Natural killer cell (primary cell): ENCODE measurements at regions of chr6 and their contacts with region 1.

Region 1: DNA sequence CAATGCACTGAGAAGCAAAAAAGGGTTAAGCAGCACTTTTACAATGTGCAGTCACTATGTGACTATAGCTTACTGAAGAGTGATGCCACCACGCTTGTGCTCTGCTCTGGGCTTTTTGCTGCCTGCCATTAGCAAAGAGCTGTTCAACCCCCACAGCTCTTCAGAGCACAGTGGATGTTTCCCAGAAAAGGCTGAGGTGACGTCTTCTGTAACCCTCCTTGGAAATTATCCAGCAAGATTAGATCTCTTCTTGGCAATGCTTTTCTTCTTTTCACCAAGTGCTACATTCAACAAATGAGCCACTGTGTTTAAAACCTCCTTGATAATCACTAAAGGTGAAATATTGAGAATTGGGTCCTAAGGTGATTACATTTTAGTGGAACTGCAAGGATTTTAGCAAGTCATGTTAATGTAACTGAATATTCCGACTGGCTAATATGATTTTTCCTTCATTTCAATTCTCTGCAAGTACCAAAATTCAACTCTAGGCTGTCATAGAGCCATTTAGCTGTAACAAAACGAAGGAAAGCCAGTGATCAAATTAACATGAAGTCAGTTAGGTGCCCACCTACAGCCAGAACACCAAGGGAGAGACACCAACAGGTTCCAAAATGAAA is 34.9 kb downstream of the ELOVL5 start:
- DNase-seq: no peak
- ATAC-seq: no peak
- H3K4me3 ChIP-seq: no peak overlapping the region
- H3K4me3 Mint-ChIP-seq: peak overlapping the region; percentile 4
- H3K27ac ChIP-seq: no peak overlapping the region
- H3K27ac Mint-ChIP-seq: peak overlapping the region; percentile 60
- H3K4me1 ChIP-seq: peaks cover 40% of the 10 kb centered on the region
- H3K4me1 Mint-ChIP-seq: peaks cover 80 to 90% of the 10 kb centered on the region in 2 donors
- H3K27me3 ChIP-seq: no peaks in the 10 kb centered on the region
- H3K27me3 Mint-ChIP-seq: no peaks in the 10 kb centered on the region
- CTCF ChIP-seq: no peak

Region 2: DNA sequence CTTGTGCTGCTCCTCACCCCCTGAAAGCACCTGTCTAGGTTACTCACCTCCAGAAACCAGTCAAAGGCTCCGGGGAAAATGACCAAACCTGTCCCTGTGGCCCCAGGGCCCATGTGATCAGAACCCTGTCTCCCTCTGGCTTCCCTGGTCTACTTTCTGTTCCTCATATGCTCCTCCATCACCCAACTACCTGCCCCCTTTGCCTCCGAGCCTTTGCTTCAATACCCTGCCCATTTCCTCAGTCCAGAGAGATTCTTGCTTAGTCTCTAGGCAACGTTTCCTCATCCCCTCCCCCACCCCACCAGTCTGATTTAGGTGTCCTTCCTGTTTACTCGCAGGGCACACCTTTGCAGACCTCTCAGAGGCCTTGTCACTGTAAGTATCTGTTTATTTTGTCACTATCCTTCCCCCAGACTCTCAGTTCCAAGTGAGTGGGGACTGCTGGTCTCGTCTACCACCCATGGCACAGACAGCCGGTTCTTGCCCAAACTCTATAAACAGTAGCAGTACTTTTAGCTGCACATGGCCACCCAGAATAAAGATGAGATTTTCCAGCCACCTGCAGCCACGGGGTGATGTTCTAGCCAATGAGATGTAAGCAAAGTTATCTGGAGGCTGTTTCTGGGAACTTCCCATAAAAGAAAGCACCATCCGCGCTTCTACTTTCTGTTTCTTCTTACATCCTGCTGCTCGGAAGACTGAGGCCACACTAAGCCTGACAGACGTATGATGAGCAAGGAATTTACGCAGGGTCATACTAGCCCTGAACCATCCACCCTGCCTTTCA is 21.5 kb after region 1 on chr6:
- intact Hi-C with region 1: loop called (anchors 2 kb)
- DNase-seq: peak; percentile 51 to 92
- ATAC-seq: peak; percentile 85 to 90 (median 87)
- H3K4me3 ChIP-seq: peak overlapping the region; percentile 35
- H3K4me3 Mint-ChIP-seq: peak overlapping the region; percentile 89
- H3K27ac ChIP-seq: peak overlapping the region; percentile 93
- H3K27ac Mint-ChIP-seq: peak overlapping the region; percentile 98 to 99
- H3K4me1 ChIP-seq: peaks cover 39% of the 10 kb centered on the region
- H3K4me1 Mint-ChIP-seq: peaks cover 89% of the 10 kb centered on the region in 2 donors
- H3K27me3 ChIP-seq: no peaks in the 10 kb centered on the region
- H3K27me3 Mint-ChIP-seq: no peaks in the 10 kb centered on the region
- CTCF ChIP-seq: no peak